ENCODE measurements at regions of chr2 and their contacts with region 1.

Region 1: GRCh38 chr2:20781656-20782265 is 41.1 kb downstream of the LDAH start:
- DNase-seq: peak; percentile 50
- H3K4me3 ChIP-seq: no peak overlapping the region; a peak in 1 of 4 replicates
- H3K27ac ChIP-seq: no peak overlapping the region
- H3K4me1 ChIP-seq: no peaks in the 10 kb centered on the region; a peak in 1 of 4 replicates
- H3K27me3 ChIP-seq: no peaks in the 10 kb centered on the region
- CTCF ChIP-seq: peak; percentile 91
- EP300 ChIP-seq: no peak
- RAD21 ChIP-seq: peak; percentile 83

Region 2: DNA sequence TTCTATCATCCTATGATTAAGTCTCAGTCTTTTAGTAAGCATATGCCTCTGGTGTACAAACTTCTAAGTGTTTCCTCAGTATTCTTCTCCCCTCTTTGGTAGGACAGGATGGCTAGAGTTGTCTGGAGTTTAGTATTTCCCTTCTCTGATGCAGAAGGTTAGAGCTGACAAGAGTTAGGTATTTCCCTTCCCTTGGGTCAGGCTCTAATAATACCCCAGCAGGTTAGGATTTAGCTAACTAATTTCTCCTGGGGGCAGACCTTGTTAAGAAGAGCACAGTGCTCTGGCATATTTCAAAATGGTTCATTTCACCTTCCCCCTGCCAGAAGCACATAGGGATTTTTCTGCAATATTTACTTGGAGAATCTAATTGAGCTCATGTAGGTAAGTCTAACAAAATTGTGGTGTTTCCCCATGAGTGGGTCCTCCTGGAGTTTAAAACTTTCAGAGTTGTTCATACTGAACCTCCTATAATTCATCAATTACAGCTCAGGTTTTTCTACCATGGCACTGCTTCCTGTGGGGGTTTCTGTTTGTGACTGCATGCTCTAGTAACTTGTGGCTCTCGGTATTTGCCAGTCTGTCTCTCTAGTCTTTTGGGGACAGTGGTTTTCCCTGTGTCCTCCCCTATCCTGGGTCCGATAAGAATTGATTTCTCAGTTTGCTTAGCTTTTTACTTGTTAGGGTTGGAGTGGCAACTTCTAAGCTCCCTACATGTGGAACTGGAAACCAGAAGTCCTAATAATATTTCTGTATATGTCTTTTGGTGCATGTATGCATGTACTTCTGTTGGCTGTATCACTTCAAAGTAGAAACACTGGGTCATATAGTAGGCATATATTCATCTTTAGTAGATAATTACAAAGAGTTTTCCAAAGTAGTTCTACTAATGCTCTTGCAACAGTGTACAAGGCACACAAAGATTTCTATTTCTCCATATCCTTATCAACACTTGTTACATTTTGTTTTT is 37.1 kb before region 1 on chr2:
- CTCF ChIA-PET with region 1: interaction called, 22 read pairs
- POLR2A ChIA-PET with region 1: no interaction called
- DNase-seq: no peak
- H3K4me3 ChIP-seq: no peak overlapping the region
- H3K27ac ChIP-seq: no peak overlapping the region
- H3K4me1 ChIP-seq: peaks cover 0 to 9% of the 10 kb centered on the region in 2 experiments; a peak in 1 of 4 replicates
- H3K27me3 ChIP-seq: no peaks in the 10 kb centered on the region
- CTCF ChIP-seq: no peak
- EP300 ChIP-seq: no peak
- RAD21 ChIP-seq: no peak

Region 3: GRCh38 chr2:20771299-20771698 is 10.5 kb before region 1 on chr2:
- CTCF ChIA-PET with region 1: interaction called, 66 read pairs
- POLR2A ChIA-PET with region 1: no interaction called
- DNase-seq: no peak
- H3K4me3 ChIP-seq: no peak overlapping the region
- H3K27ac ChIP-seq: no peak overlapping the region
- H3K4me1 ChIP-seq: no peaks in the 10 kb centered on the region
- H3K27me3 ChIP-seq: no peaks in the 10 kb centered on the region
- CTCF ChIP-seq: no peak
- EP300 ChIP-seq: no peak
- RAD21 ChIP-seq: no peak

Region 4: GRCh38 chr2:20803226-20803682 is 21.5 kb after region 1 on chr2:
- CTCF ChIA-PET with region 1: interaction called, 13 read pairs
- POLR2A ChIA-PET with region 1: no interaction called
- DNase-seq: peak; percentile 56
- H3K4me3 ChIP-seq: no peak overlapping the region
- H3K27ac ChIP-seq: peak overlapping the region in 1 of 2 experiments; percentile 70; a peak in 2 of 4 replicates
- H3K4me1 ChIP-seq: peaks cover 0 to 13% of the 10 kb centered on the region in 2 experiments; a peak in 2 of 4 replicates
- H3K27me3 ChIP-seq: no peaks in the 10 kb centered on the region
- CTCF ChIP-seq: no peak
- EP300 ChIP-seq: no peak
- RAD21 ChIP-seq: no peak

Region 5: DNA sequence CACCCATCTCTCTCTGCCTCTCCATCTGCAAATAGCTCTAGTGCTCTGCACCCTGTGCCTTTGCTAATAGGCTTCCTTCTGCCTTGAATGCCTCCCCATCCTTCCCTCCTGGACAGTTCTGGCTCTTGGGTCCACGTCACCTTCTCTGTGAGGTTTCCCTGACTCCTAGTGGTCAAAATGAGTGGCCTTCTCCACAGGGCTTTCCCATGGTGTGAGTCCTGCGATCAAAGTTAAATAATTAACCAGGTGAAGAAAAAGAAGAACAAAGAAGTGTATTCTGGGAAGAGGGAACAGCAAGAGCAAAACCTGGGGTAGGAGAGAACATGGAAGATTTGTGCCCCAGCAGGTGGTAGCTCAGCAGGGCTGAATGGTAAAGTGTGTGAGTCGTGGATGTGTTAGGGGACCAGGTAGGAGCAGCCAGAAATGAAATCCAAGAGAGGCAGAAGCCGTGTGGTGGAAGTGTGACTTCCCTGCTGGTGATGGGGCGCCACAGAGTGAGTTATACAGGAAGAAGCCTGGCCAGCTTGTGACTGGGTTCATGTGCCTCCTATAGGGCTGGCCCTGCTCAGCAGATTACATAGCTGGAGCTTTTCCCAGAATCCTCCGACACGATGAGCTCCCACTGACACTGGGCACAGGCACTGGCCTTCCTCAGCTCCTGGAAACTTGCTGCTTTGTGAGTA is 135.0 kb after region 1 on chr2:
- CTCF ChIA-PET with region 1: interaction called, 28 read pairs
- POLR2A ChIA-PET with region 1: no interaction called
- DNase-seq: peak; percentile 50
- H3K4me3 ChIP-seq: no peak overlapping the region
- H3K27ac ChIP-seq: peak overlapping the region in 1 of 2 experiments; percentile 47; a peak in 2 of 4 replicates
- H3K4me1 ChIP-seq: peaks cover 13 to 20% of the 10 kb centered on the region in 2 experiments; a peak in 3 of 4 replicates
- H3K27me3 ChIP-seq: no peaks in the 10 kb centered on the region; the same call in 1 of the 2 replicates
- CTCF ChIP-seq: peak; percentile 45
- EP300 ChIP-seq: no peak
- RAD21 ChIP-seq: peak; percentile 74

Region 6: DNA sequence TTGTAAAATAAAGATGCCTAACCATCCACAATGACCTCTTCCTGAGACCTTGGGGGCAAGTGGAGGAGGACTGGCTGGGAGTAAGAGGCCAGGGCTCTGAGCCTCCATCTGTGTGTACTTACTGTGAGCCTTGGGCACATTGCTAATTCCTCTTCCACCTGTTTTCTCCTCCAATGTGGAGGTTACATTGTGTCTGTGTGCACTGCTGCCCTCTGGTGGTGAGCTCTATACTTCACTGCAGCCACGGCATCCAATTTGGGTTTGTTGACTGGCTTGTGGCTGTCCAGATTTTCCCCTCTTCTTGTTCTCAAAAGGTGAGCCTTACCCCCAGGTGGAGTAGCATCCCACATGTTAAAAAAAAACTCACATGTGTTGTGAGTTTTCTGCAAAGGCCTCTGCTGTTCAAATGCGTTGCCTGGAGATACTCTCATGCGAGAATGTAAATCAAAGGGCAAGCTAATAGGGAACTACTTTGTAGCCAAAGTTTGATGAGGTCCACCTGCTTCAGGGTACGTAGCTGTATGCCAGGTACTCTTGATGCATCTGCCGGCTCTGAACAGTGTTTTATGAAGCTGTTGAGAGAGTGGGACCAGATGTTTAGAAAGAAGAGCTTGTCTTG is 181.3 kb after region 1 on chr2:
- CTCF ChIA-PET with region 1: interaction called, 127 read pairs
- POLR2A ChIA-PET with region 1: interaction called, 6 read pairs
- DNase-seq: peak; percentile 84
- H3K4me3 ChIP-seq: no peak overlapping the region; a peak in 1 of 4 replicates
- H3K27ac ChIP-seq: no peak overlapping the region
- H3K4me1 ChIP-seq: no peaks in the 10 kb centered on the region; a peak in 1 of 4 replicates
- H3K27me3 ChIP-seq: peaks cover 14% of the 10 kb centered on the region; the same call in 1 of the 2 replicates
- CTCF ChIP-seq: peak; percentile 98
- EP300 ChIP-seq: no peak
- RAD21 ChIP-seq: peak; percentile 97

Region 7: DNA sequence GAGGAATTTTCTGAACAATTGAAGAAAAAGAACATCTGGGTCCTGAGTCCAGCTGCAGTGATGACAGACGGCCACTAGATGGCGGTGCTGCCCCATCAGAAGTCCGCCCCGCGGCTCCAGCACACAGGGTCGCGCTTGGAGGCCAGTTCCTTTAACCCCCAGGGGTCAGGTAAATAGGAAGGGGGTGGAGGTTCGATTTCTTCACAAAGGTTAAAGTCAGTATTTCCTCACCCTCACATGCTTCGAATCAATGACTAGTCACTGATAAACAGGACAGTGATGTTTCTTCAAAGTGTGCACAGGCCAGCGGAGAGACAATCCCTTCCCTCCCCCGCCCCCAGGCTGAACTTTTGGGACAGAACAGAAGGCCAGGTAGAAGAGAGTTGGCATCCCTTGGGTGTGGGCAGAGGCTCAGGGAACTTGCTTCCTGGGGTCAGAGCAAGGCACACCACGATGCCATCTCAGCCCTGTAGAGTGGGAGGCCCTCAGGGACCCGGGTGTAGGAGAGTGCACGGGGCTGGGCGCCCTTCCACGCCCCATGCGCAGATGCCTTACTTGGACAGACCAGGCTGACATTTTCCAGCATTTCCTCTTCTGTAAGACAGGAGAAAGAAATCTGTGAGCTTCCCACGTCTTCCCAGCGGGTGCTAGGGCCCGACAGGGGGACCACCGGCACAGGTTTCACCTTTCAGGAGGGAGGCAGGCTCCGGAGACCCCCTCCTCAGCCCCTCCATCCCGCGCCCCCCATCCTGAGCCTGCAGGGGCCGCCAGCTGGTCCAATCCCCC is 261.4 kb after region 1 on chr2:
- CTCF ChIA-PET with region 1: interaction called, 12 read pairs
- POLR2A ChIA-PET with region 1: no interaction called
- DNase-seq: peak; percentile 91
- H3K4me3 ChIP-seq: peak overlapping the region in 1 of 2 experiments; percentile 41; a peak in 1 of 4 replicates
- H3K27ac ChIP-seq: no peak overlapping the region
- H3K4me1 ChIP-seq: peaks cover 0 to 23% of the 10 kb centered on the region in 2 experiments; a peak in 2 of 4 replicates
- H3K27me3 ChIP-seq: no peaks in the 10 kb centered on the region; the same call in 1 of the 2 replicates
- CTCF ChIP-seq: peak; percentile 100
- EP300 ChIP-seq: no peak
- RAD21 ChIP-seq: peak; percentile 100

Measured in SK-N-SH (cell line).